Sciatic nerve (tissue), 2 donors: ENCODE measurements at regions of chr5 and their contacts with region 1.

Region 1: GRCh38 chr5:58460732-58461286 is 923 bp upstream of the PLK2 start:
- DNase-seq: peak; percentile 97
- ATAC-seq: peak; percentile 90

Region 2: DNA sequence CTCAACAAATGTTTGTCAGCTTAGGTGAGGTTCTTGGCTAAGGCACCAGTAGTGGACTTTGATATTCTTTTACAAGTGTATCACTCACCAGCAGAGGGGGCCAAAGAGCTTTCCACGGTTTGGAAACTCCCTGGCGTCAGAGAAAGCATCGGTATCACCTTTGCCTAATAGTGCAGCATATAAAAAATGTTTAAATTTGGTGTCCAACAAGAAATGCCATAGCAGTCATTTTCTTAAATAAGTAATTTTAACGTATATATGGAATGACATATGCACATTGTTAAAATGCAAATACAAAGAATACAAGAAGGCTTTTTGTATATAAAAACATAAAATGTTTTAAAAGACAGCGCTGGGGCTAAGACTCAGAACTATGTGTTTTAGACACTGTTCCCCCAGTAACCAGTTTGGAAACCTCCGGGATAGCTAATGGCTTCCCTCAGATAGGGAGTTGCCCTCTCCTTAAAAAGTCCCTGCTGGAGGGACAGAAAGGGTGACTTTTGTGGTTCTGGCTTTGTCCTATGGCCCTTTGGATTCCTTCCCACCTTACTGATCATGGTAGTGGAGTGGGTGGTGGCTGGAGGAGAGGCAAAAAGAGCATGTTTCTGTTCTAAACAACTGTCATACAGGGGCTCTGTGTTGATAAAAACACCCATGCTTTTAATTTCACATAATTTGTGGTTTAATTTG is 1162.4 kb before region 1 on chr5:
- intact Hi-C with region 1: loop called (anchors 5 kb)
- DNase-seq: peak; percentile 94
- ATAC-seq: peak; percentile 94

Region 3: GRCh38 chr5:57499262-57500050 is 961.4 kb before region 1 on chr5:
- intact Hi-C with region 1: loop called (anchors 2 kb)
- DNase-seq: no peak
- ATAC-seq: peak; percentile 65

Region 4: GRCh38 chr5:57779383-57780223 is 681.2 kb before region 1 on chr5:
- intact Hi-C with region 1: loop called (anchors 5 kb)
- DNase-seq: no peak
- ATAC-seq: peak; percentile 78

Region 5: GRCh38 chr5:58505971-58506640 is 45.3 kb after region 1 on chr5:
- intact Hi-C with region 1: no loop called
- DNase-seq: no peak
- ATAC-seq: no peak